ENCODE measurements at regions of chr20 and their contacts with region 1.

Region 1: DNA sequence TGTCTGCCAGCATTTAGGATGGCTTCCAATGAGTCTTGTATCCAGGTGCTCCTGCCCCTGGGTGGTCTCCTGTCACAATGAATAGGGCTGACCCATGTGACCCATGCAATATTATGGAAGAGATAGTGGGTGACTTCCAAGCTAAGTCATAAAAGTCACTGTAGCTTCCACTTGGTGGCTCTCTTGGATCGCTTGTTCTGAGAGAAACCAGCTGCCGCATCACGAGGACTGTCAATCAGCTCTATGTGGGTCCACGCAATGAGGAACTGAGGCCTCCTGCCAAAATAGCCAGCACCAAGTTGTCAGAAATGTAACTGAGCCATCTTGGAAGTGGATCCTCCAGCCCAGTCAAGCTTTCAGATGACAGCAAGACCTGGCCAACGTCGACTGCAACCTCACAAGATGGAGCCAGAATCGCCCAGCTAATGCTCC is 14.9 kb upstream of the MATN4 start:
- DNase-seq: no peak
- H3K4me3 ChIP-seq: no peak overlapping the region
- H3K27ac ChIP-seq: no peak overlapping the region
- H3K4me1 ChIP-seq: no peaks in the 10 kb centered on the region; a peak in 1 of 7 replicates
- H3K27me3 ChIP-seq: no peaks in the 10 kb centered on the region
- CTCF ChIP-seq: peak in 2 of 3 experiments; percentile 42 to 54; a peak in 3 of 4 replicates
- EP300 ChIP-seq: no peak
- POLR2A ChIP-seq: no peak
- RAD21 ChIP-seq: peak; percentile 73 to 82

Region 2: DNA sequence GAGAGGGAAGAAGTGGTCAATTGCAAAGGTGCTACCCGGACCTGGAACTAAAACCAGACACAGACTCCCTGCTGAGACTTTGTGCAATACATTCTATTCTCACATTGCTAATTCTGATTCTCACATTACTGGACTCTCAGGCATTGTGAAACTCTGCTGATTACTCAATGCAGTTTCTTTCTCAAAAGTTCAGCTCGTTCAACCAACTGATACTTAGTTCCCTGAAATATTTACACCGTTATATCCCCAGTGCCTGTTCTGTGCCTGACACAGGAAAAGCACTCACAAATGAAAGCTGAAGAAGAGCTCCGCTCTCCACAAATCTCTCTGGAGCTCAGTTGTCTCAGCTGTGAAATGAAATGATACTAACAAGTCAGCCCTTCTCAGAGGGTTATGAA is 68.1 kb before region 1 on chr20:
- CTCF ChIA-PET with region 1: no interaction called
- POLR2A ChIA-PET with region 1: no interaction called
- DNase-seq: no peak
- H3K4me3 ChIP-seq: no peak overlapping the region
- H3K27ac ChIP-seq: no peak overlapping the region
- H3K4me1 ChIP-seq: peaks cover 0 to 6% (median 3%) of the 10 kb centered on the region in 4 experiments; a peak in 5 of 7 replicates
- H3K27me3 ChIP-seq: peaks cover 0 to 2% (median 0%) of the 10 kb centered on the region in 4 experiments; a peak in 2 of 7 replicates
- CTCF ChIP-seq: no peak
- EP300 ChIP-seq: no peak
- POLR2A ChIP-seq: no peak
- RAD21 ChIP-seq: no peak

Region 3: GRCh38 chr20:45279992-45280391 is 43.0 kb before region 1 on chr20:
- CTCF ChIA-PET with region 1: no interaction called
- POLR2A ChIA-PET with region 1: no interaction called
- DNase-seq: no peak
- H3K4me3 ChIP-seq: no peak overlapping the region
- H3K27ac ChIP-seq: no peak overlapping the region
- H3K4me1 ChIP-seq: no peaks in the 10 kb centered on the region
- H3K27me3 ChIP-seq: no peaks in the 10 kb centered on the region
- CTCF ChIP-seq: no peak
- EP300 ChIP-seq: no peak
- POLR2A ChIP-seq: no peak
- RAD21 ChIP-seq: no peak

Region 4: GRCh38 chr20:45306431-45306982 is 16.5 kb before region 1 on chr20 and contains the start of gene RBPJL:
- CTCF ChIA-PET with region 1: interaction called, 15 read pairs
- POLR2A ChIA-PET with region 1: no interaction called
- DNase-seq: peak in 1 of 2 experiments; percentile 91
- H3K4me3 ChIP-seq: peak within 1 kb of the TSS in 1 of 4 experiments; percentile 45; a peak in 2 of 8 replicates
- H3K27ac ChIP-seq: no peak within 1 kb of the TSS
- H3K4me1 ChIP-seq: peaks cover 0 to 14% (median 7%) of the 10 kb centered on the region in 4 experiments; a peak in 5 of 7 replicates
- H3K27me3 ChIP-seq: peaks cover 0 to 9% (median 2%) of the 10 kb centered on the region in 4 experiments; a peak in 5 of 7 replicates
- CTCF ChIP-seq: peak; percentile 90 to 95 (median 93)
- EP300 ChIP-seq: peak in 1 of 2 experiments; percentile 32; a peak in 1 of 3 replicates
- POLR2A ChIP-seq: no peak
- RAD21 ChIP-seq: peak in 1 of 2 experiments; percentile 39; a peak in 3 of 4 replicates
- total RNA-seq, gene RBPJL: 0.67 and 0.73 TPM in 2 replicates

Region 5: DNA sequence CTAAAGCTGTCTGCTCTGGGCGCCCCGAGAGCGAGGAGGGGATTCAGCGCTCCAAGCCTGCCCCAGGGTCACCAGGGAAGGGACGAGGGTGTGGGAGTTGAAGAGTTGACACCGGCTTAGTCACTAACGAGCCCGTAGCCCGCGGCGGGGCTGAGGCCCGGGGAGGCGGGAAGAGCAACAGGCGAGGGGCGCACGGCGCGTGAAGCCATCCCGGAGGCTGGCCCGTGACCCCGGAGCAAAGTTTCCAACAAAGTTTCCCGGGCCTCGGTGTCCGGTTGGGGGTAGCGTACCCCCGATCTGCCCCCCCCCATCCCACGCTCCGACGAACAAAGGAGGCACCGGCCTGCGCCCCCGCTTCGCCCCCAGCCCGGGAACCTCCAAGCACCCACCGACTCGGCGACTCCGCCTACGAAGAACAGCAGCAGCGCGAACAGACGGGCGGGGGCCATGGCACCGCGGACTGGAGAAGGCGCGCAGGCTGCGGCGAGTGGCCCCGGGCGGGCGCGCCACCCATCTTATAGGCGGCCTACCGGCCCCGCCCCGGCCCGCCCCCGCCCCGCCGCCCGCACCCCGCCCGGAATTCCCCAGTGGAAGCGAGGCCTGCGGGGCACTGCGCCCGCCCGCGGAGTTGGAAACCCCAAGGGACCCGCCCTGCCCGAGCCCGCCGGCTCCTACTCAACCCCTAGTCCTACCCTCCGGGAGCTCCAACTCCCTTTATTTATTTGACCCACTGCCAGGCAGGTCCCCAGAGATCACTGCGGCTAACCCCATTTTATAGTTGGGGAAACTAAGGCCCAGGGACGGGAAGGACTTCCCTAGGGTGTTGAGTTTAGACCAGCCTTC is 25.2 kb after region 1 on chr20 and contains the start of gene SDC4:
- CTCF ChIA-PET with region 1: interaction called, 13 read pairs
- POLR2A ChIA-PET with region 1: interaction called, 11 read pairs
- DNase-seq: peak in 1 of 2 experiments; percentile 63
- H3K4me3 ChIP-seq: peak within 1 kb of the TSS; percentile 68 to 95 (median 72)
- H3K27ac ChIP-seq: peak within 1 kb of the TSS; percentile 10; the same call in 1 of the 2 replicates
- H3K4me1 ChIP-seq: peaks cover 26 to 45% (median 35%) of the 10 kb centered on the region in 4 experiments
- H3K27me3 ChIP-seq: no peaks in the 10 kb centered on the region
- CTCF ChIP-seq: no peak
- EP300 ChIP-seq: no peak
- POLR2A ChIP-seq: peak; percentile 96
- RAD21 ChIP-seq: no peak
- total RNA-seq, gene SDC4: 59.2 and 60.2 TPM in 2 replicates

Region 6: DNA sequence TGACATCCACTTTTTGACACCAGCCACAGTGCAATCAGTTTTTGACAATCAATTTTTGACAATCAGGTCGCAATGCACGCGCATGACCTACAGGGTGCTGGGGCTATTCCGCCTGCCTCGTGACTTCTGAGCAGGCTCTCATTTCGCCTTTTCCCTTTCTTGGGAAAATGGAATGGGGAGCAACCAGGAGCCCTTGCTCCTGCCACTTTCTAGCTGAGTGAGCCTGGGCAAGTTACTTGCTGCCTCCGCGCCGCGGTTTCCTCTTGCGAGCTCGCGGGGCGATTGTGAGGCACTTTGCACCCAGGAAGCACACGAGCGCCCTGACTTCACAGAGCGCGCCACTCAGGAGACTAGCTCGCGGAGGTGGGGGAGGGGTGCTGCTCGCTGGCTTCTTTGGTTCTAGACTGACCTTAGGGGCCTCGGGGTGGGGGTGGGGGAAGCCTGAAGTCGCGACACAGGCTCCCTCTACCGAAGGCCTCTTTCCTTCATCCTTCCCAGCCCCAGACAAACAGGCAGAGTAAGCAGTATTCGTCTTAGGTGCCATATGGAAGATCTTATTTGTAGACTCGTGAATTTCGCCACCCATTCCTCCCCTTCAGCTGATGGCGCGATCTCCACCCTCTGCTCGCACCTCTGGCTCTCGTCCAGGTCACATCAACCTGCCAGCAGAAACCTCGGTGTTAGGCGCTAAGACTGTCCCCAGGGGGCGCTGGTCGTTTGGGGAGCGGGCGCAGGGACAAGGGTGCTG is 50.6 kb after region 1 on chr20:
- CTCF ChIA-PET with region 1: interaction called, 156 read pairs
- POLR2A ChIA-PET with region 1: no interaction called
- DNase-seq: peak; percentile 70 to 96
- H3K4me3 ChIP-seq: peak overlapping the region; percentile 27 to 63 (median 45); a peak in 7 of 8 replicates
- H3K27ac ChIP-seq: no peak overlapping the region
- H3K4me1 ChIP-seq: peaks cover 0 to 16% (median 9%) of the 10 kb centered on the region in 4 experiments; a peak in 6 of 7 replicates
- H3K27me3 ChIP-seq: peaks cover 0 to 12% (median 9%) of the 10 kb centered on the region in 4 experiments; a peak in 3 of 7 replicates
- CTCF ChIP-seq: peak; percentile 88 to 96 (median 92)
- EP300 ChIP-seq: no peak
- POLR2A ChIP-seq: no peak
- RAD21 ChIP-seq: peak; percentile 77 to 85

Region 7: DNA sequence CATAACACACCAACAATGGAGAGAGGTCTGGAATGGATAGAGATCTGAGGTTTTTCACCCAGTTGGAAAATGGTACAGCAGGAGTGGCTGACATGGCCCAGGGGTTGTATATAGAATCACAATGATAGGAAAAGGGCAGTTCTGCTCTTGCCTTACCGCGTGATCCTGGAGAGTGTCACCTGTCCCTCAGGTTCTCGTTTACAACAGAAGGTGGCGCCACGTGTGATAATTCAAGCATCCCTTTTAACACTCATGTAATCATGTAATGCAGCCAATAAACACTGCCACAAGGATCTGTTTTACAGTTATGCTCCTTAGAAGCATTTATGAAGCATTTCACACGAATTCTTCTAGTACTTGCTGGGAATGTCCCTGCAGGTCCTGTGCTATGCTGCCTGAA is 133.7 kb after region 1 on chr20:
- CTCF ChIA-PET with region 1: interaction called, 45 read pairs
- POLR2A ChIA-PET with region 1: no interaction called
- DNase-seq: peak in 1 of 2 experiments; percentile 73
- H3K4me3 ChIP-seq: no peak overlapping the region
- H3K27ac ChIP-seq: no peak overlapping the region
- H3K4me1 ChIP-seq: no peaks in the 10 kb centered on the region; a peak in 1 of 7 replicates
- H3K27me3 ChIP-seq: no peaks in the 10 kb centered on the region
- CTCF ChIP-seq: peak; percentile 58 to 76 (median 63)
- EP300 ChIP-seq: no peak
- POLR2A ChIP-seq: no peak
- RAD21 ChIP-seq: peak; percentile 50 to 64